ENCODE measurements at regions of chr20 and their contacts with region 1.

Region 1: GRCh38 chr20:6708010-6708409 is 59.5 kb upstream of the BMP2 start:
- DNase-seq: no peak
- ATAC-seq: no peak
- H3K4me3 Mint-ChIP-seq: no peak overlapping the region
- H3K27ac Mint-ChIP-seq: no peak overlapping the region
- H3K4me1 Mint-ChIP-seq: no peaks in the 10 kb centered on the region
- H3K27me3 Mint-ChIP-seq: peaks cover 3% of the 10 kb centered on the region
- CTCF ChIP-seq: no peak

Region 2: GRCh38 chr20:6654513-6655252 is 53.3 kb before region 1 on chr20:
- CTCF ChIA-PET with region 1: no interaction called
- POLR2A ChIA-PET with region 1: no interaction called
- intact Hi-C with region 1: loop called (anchors 5 kb)
- DNase-seq: no peak
- ATAC-seq: no peak
- H3K4me3 Mint-ChIP-seq: no peak overlapping the region
- H3K27ac Mint-ChIP-seq: no peak overlapping the region
- H3K4me1 Mint-ChIP-seq: no peaks in the 10 kb centered on the region
- H3K27me3 Mint-ChIP-seq: no peaks in the 10 kb centered on the region
- CTCF ChIP-seq: no peak